OCI-LY7 (cell line): ENCODE measurements at regions of chr12 and their contacts with region 1.

Region 1: DNA sequence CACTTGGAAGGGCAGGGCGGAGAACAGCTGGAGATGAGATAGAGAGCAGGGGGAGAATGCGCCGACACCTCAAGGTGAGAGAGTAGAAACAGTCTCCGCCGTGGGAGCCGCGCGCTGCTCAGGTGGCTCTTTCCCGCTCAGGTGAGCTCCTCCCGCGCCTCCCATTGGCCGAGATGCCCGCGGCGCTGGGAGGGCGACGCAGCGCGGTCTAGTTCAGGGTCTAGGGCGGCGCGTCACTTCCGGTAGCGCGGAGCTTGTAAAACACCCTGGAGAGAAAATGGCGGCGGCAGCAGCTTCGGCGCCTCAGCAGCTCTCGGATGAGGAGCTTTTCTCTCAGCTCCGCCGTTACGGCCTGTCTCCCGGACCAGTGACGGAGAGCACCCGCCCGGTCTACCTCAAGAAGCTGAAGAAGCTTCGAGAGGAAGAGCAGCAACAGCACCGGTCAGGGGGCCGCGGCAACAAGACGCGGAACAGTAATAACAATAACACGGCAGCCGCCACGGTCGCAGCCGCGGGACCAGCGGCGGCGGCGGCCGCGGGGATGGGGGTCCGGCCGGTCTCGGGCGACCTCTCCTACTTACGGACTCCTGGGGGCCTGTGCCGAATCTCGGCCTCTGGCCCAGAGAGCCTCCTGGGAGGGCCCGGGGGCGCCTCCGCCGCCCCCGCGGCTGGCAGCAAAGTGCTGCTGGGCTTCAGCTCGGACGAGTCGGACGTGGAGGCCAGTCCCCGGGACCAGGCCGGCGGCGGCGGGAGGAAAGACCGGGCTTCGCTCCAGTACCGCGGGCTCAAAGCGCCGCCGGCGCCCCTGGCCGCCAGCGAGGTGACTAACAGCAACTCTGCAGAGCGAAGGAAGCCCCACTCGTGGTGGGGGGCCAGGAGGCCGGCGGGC is at the start of gene LEMD3:
- DNase-seq: peak; percentile 95
- H3K4me3 ChIP-seq: peak within 1 kb of the TSS; percentile 95
- H3K27ac ChIP-seq: peak within 1 kb of the TSS; percentile 75
- H3K4me1 ChIP-seq: peaks cover 29% of the 10 kb centered on the region
- CTCF ChIP-seq: peak; percentile 29; the same call in 1 of the 2 replicates
- total RNA-seq, gene LEMD3: 45.5 and 58.0 TPM in 2 replicates

Region 2: GRCh38 chr12:65182012-65182739 is 12.6 kb after region 1 on chr12:
- CTCF ChIA-PET with region 1: no interaction called
- POLR2A ChIA-PET with region 1: interaction called, 24 read pairs
- intact Hi-C with region 1: no loop called
- DNase-seq: no peak
- H3K4me3 ChIP-seq: no peak overlapping the region
- H3K27ac ChIP-seq: no peak overlapping the region
- H3K4me1 ChIP-seq: peaks cover 1% of the 10 kb centered on the region
- CTCF ChIP-seq: no peak

Region 3: GRCh38 chr12:65195387-65196055 is 26.0 kb after region 1 on chr12:
- CTCF ChIA-PET with region 1: no interaction called
- POLR2A ChIA-PET with region 1: interaction called, 12 read pairs
- intact Hi-C with region 1: no loop called
- DNase-seq: no peak
- H3K4me3 ChIP-seq: no peak overlapping the region
- H3K27ac ChIP-seq: no peak overlapping the region
- H3K4me1 ChIP-seq: peaks cover 19% of the 10 kb centered on the region
- CTCF ChIP-seq: no peak

Region 4: DNA sequence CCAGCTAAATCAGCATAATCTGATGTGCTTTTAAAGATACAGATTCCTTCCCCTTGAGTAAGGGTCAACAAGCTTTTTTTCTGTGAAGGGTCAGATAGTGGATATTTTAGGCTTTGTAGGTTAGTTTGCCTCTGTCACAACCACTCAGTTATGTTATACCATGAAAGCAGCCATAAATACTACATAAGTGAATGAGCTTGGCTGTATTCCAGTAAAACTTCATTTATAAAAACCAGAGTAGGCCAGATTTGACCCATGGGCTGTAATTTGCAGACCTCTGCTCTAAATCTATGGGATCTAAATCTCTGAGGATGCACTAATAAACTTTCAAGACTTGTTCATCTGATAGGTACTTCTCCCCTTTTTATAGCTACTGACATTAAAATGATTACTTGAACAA is 47.5 kb after region 1 on chr12:
- CTCF ChIA-PET with region 1: no interaction called
- POLR2A ChIA-PET with region 1: interaction called, 21 read pairs
- intact Hi-C with region 1: no loop called
- DNase-seq: no peak
- H3K4me3 ChIP-seq: no peak overlapping the region
- H3K27ac ChIP-seq: no peak overlapping the region
- H3K4me1 ChIP-seq: no peaks in the 10 kb centered on the region
- CTCF ChIP-seq: no peak

Region 5: DNA sequence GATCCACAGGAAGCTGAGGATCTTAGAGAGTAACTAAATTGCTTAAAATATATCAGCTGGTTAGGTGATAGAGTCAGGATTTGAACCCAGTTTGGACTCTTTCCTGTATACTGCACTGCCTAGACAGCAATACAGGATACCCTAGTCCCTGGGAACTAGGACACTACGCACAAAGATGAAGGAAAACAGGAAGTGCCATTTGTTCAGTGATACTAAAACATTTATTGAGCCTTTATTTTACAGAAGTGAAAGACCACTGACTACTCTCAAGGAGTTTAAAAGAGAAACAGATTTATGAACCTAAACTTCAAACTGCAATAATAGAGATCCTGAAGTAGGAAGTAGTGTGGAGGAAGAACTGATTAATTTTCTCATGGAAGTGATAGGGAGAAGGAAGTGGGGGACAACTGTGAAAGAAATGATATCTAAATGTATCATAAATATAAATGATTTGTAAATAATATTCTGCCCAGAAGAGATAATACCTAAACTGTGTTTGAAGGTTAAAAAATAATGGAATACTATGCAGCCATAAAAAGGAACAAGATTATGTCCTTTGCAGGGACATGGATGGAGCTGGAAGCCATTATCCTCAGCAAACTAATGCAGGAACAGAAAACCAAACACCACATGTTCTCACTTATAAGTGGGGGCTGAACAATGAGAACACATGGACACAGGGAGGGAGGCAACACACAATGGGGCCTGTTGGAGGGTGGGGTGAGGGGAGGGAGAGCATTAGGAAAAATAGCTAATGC is 127.1 kb after region 1 on chr12:
- CTCF ChIA-PET with region 1: no interaction called
- POLR2A ChIA-PET with region 1: no interaction called
- intact Hi-C with region 1: no loop called
- DNase-seq: no peak
- H3K4me3 ChIP-seq: no peak overlapping the region
- H3K27ac ChIP-seq: no peak overlapping the region
- H3K4me1 ChIP-seq: no peaks in the 10 kb centered on the region
- CTCF ChIP-seq: no peak

Region 6: DNA sequence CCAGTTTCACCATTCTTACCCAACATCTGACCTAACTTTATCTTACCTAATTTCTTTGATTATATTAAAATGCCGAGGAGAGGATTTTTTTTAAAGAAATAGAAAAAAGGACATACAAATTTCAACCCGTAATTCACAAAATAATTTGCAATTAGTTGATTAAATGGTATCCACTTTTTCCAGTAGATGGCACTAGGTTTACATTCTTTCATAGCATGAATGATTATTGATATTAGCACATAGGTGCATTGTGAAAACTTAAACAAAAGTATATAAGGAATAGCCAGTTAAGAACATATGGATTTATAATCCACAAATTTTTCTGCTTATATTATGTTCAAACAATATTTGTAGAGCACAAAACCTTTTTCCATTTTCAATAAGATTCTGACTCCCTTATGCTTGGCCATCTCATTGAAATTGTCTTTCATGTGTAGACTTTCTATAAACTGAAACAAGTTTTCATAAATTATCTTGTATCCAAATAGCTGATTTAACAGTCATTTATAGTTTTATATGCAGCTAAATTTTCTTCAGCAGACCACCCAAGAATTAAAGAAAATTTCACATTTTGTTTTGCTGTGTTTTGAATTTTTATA is 144.3 kb after region 1 on chr12:
- CTCF ChIA-PET with region 1: no interaction called
- POLR2A ChIA-PET with region 1: no interaction called
- intact Hi-C with region 1: no loop called
- DNase-seq: peak; percentile 0
- H3K4me3 ChIP-seq: no peak overlapping the region
- H3K27ac ChIP-seq: no peak overlapping the region
- H3K4me1 ChIP-seq: no peaks in the 10 kb centered on the region
- CTCF ChIP-seq: peak; percentile 79

Region 7: GRCh38 chr12:65409726-65410125 is 240.2 kb after region 1 on chr12:
- CTCF ChIA-PET with region 1: no interaction called
- POLR2A ChIA-PET with region 1: no interaction called
- intact Hi-C with region 1: no loop called
- DNase-seq: no peak
- H3K4me3 ChIP-seq: no peak overlapping the region
- H3K27ac ChIP-seq: no peak overlapping the region
- H3K4me1 ChIP-seq: no peaks in the 10 kb centered on the region
- CTCF ChIP-seq: no peak

Region 8: GRCh38 chr12:65464930-65465329 is 295.4 kb after region 1 on chr12:
- CTCF ChIA-PET with region 1: no interaction called
- POLR2A ChIA-PET with region 1: no interaction called
- intact Hi-C with region 1: no loop called
- DNase-seq: no peak
- H3K4me3 ChIP-seq: no peak overlapping the region
- H3K27ac ChIP-seq: no peak overlapping the region
- H3K4me1 ChIP-seq: no peaks in the 10 kb centered on the region
- CTCF ChIP-seq: no peak